Pancreas (tissue), 10 donors: ENCODE measurements at regions of chr1 and their contacts with region 1.

Region 1: DNA sequence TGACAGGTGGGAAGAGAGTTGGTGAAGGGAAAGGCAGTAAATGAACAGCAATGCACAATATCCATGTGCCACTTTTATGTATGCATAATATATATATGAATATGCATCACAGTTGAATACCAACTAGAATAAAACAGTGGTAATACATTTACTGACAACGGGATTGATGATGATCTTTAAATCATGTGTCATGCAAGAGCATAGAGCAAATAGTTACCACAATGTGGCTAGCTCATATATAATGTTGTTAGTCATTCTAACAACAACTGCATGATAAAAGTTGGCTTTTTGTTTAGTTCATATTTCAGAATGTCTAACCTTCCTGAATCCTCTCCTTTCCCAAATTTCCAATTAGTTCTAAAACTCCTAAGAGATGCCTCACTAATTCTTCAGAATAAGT is 46.4 kb downstream of the GORAB start:
- DNase-seq: no peak
- ATAC-seq: no peak
- H3K4me3 ChIP-seq: no peak overlapping the region
- H3K27ac ChIP-seq: no peak overlapping the region
- H3K4me1 ChIP-seq: no peaks in the 10 kb centered on the region
- H3K27me3 ChIP-seq: no peaks in the 10 kb centered on the region
- CTCF ChIP-seq: no peak

Region 2: DNA sequence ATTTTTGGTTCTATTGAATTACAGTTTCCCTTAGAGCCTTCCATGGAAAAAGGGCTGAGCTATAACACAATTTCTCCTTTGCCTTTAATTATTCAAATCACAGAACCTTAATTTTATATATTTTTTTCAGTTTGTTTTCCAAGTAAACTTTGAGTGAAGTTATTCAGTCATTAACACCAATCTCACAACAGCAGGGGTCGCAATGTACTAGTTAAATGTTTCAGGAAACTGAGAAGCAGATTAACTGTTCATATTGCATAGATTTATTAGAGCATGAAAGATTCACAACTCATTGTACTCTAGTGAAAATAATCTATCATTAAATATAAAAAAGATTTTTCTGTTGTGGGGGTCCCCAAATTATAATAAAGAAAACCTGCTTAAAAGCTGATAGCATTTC is 567.9 kb before region 1 on chr1:
- intact Hi-C with region 1: no loop called
- DNase-seq: peak in 2 of 6 donors; percentile 2 to 10
- ATAC-seq: peak in 1 of 4 donors; percentile 39
- H3K4me3 ChIP-seq: no peak overlapping the region
- H3K27ac ChIP-seq: no peak overlapping the region
- H3K4me1 ChIP-seq: no peaks in the 10 kb centered on the region
- H3K27me3 ChIP-seq: no peaks in the 10 kb centered on the region
- CTCF ChIP-seq: peak in 1 of 4 donors; percentile 13

Region 3: GRCh38 chr1:170634293-170634692 is 55.9 kb after region 1 on chr1:
- intact Hi-C with region 1: loop called in 1 of 3 experiments (anchors 10 kb)
- DNase-seq: no peak
- ATAC-seq: no peak
- H3K4me3 ChIP-seq: no peak overlapping the region
- H3K27ac ChIP-seq: no peak overlapping the region
- H3K4me1 ChIP-seq: no peaks in the 10 kb centered on the region
- H3K27me3 ChIP-seq: no peaks in the 10 kb centered on the region
- CTCF ChIP-seq: no peak